A549 (cell line): ENCODE measurements at regions of chr1 and their contacts with region 1.

Region 1: GRCh38 chr1:110460253-110461220 is 9.6 kb downstream of the PROK1 start:
- DNase-seq: peak; percentile 55 to 67
- ATAC-seq: peak; percentile 60 to 83
- H3K4me3 ChIP-seq: no peak overlapping the region
- H3K27ac ChIP-seq: no peak overlapping the region
- H3K4me1 ChIP-seq: peaks cover 27% of the 10 kb centered on the region
- CTCF ChIP-seq: peak; percentile 90
- EP300 ChIP-seq: no peak
- POLR2A ChIP-seq: no peak
- RAD21 ChIP-seq: peak; percentile 94 to 97

Region 2: DNA sequence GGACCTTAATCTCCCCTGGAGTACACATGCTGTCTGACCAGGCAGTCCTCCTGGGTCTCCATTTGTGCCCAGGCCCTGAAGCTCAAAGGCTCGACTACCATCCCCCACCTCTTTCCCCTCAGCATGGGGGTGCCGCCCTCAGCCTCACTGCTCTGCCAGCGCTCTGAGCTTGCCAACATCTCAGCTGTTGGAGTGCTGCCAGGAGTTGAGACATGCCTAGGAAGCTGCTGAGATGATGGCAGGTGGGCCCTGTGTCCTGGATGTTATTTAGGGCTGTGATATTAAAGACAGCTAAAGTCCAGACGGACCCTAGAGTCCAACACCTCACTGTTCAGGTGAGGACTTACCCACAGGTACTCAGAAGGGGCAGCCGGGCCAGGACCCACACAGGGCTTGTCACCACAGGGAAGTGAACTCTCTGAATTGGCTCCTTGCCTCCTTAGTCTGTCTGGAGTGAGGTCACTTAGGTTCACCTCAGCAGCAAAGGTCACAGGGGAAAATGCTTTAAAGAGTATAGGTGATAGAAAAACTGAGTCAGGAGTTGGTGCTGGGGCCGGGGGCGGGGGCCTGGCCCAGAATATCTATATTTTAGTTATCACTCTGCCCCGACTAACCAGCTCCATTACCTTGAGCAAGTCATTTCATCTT is 270.1 kb before region 1 on chr1:
- CTCF ChIA-PET with region 1: interaction called, 15 read pairs
- POLR2A ChIA-PET with region 1: no interaction called
- DNase-seq: no peak
- ATAC-seq: no peak
- H3K4me3 ChIP-seq: no peak overlapping the region
- H3K27ac ChIP-seq: no peak overlapping the region
- H3K4me1 ChIP-seq: no peaks in the 10 kb centered on the region
- CTCF ChIP-seq: no peak
- EP300 ChIP-seq: no peak
- POLR2A ChIP-seq: no peak
- RAD21 ChIP-seq: no peak

Region 3: GRCh38 chr1:110312188-110313121 is 148.1 kb before region 1 on chr1:
- CTCF ChIA-PET with region 1: interaction called, 14 read pairs
- POLR2A ChIA-PET with region 1: no interaction called
- DNase-seq: peak; percentile 42 to 69
- ATAC-seq: peak; percentile 97 to 100
- H3K4me3 ChIP-seq: no peak overlapping the region
- H3K27ac ChIP-seq: no peak overlapping the region
- H3K4me1 ChIP-seq: no peaks in the 10 kb centered on the region
- CTCF ChIP-seq: peak; percentile 82
- EP300 ChIP-seq: no peak
- POLR2A ChIP-seq: no peak
- RAD21 ChIP-seq: peak; percentile 95

Region 4: DNA sequence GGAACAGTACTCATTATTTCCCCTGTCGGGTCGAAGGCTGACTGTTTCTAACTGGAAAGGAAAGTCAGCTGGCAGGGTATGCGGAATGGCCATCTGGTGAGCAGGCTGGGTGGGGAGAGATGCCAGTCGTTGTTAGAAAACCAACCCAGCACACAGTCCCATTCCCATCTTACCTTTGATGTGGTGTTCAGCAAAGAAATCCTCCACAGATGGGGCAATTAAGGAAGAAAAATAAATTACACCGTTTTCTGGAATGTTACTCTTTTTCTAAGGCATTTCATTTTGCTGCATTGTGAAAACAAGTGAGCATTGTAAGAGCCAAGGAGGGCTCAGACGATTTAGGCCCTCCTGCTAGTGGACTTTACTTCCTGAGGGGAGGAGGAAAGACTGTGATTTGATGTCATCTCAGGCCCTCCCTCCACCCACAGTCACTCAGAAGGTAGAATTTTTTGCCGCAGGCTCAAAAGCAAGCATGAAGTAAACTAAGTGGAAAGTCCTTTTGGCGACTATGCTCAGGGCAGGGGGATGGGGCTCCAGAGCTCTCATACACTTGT is 69.8 kb before region 1 on chr1 and contains the start of gene SLC16A4:
- CTCF ChIA-PET with region 1: interaction called, 11 read pairs
- POLR2A ChIA-PET with region 1: no interaction called
- DNase-seq: peak; percentile 36 to 79
- ATAC-seq: peak; percentile 83 to 84
- H3K4me3 ChIP-seq: peak within 1 kb of the TSS; percentile 63
- H3K27ac ChIP-seq: peak within 1 kb of the TSS; percentile 91 to 92
- H3K4me1 ChIP-seq: peaks cover 65% of the 10 kb centered on the region
- CTCF ChIP-seq: no peak
- EP300 ChIP-seq: no peak
- POLR2A ChIP-seq: no peak
- RAD21 ChIP-seq: no peak
- polyA plus RNA-seq, gene SLC16A4: 176 and 188 TPM in 2 replicates

Region 5: DNA sequence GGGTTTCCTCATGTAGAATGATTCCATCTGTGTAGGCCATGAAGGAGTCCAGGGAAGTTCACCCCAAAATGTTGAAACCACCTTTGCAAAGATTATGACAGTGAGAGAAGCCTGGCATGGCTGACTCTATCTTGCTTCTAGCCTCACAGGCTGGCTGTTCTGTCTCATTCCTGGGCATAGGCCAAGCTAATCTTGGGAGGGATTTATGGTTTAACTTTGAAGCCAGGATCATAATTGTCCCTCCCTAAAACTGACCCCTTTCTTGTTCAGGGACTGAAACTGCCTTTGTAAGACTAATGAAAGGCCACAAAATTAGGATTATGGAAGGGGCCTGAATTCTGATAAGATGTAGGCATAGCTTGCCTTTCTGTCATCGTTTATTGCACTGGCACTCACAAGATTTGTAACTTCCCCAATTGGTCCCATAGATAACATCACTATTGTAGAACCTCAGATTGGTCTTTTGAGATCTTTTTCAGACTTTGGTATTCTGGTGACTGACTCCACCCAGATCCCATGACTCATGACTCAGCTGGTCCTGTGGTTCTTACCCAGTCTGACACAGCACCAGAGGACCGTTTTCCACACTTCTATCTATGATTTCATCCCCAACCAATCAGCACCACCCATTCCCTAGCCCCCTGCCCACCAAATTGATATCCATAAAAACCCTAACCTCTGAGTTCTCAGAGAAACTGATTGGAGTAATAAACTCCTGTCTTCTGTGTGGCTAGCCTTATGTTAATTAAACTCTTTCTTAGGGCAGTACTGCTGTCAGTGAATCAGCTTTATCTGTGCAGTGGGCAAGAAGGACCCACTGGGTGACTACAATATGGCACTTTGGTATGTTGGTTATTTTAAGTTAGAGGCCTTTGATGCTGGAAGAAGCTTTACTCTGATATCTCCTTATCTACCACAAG is 39.4 kb before region 1 on chr1:
- CTCF ChIA-PET with region 1: interaction called, 326 read pairs
- POLR2A ChIA-PET with region 1: no interaction called
- DNase-seq: no peak
- ATAC-seq: no peak
- H3K4me3 ChIP-seq: no peak overlapping the region
- H3K27ac ChIP-seq: no peak overlapping the region
- H3K4me1 ChIP-seq: no peaks in the 10 kb centered on the region
- CTCF ChIP-seq: no peak
- EP300 ChIP-seq: no peak
- POLR2A ChIP-seq: no peak
- RAD21 ChIP-seq: no peak

Region 6: DNA sequence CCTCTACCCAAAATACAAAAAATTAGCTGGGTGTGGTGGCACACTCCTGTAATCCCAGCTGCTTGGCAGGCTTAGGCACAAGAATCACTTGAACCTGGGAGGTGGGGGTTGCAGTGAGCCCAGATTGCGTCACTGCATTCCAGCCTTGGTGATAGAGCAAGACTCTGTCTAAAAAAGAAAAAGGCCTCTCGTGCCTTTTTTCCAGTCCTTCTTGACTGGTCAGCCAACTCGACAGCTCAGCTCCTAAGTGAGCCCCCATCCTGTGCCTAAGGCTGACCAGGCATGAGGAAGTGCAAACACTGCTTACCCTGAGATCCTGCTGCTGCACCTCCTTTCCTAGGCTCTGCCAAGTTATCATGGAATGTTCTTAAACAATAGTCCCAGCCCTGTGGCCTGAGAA is 19.7 kb before region 1 on chr1:
- CTCF ChIA-PET with region 1: interaction called, 29 read pairs
- POLR2A ChIA-PET with region 1: no interaction called
- DNase-seq: no peak
- ATAC-seq: no peak
- H3K4me3 ChIP-seq: no peak overlapping the region
- H3K27ac ChIP-seq: no peak overlapping the region; a peak in 2 of 6 replicates
- H3K4me1 ChIP-seq: no peaks in the 10 kb centered on the region
- CTCF ChIP-seq: no peak
- EP300 ChIP-seq: no peak
- POLR2A ChIP-seq: no peak
- RAD21 ChIP-seq: no peak